Activated B cell treated with CpG ODN at 0.5 μM for 24 hours (primary cell): ENCODE measurements at regions of chr16 and their contacts with region 1.

Region 1: DNA sequence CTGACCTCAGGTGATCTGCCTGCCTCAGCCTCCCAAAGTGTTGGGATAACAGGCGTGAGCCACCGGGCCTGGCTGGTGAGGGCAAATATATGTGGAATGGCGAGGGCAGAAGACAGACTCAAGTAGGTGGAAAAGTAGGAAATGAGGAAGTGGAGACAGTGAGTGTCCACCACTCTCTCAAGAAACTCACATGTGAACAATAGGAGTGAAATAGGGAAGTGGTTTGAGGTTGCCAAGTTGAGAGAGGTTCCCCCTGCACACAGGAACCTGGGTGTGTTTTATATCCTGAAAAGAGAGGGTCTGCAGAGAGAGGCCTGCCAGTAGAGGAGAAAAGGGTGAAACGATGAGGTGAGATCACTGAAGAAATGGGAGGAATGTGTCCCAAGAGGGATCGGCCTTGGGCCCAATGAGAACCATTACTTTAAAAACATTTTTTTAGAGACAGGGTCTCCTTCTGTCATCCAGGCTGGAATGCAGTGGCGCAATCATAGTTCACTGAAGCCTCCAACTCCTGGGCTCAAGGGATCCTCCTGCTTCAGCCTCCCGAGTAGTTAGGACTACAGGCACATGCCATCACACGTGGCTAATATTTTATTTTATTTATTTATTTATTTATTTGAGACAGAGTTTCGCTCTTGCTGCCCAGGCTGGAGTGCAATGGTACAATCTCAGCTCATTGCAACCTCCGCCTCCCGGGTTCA is 17.1 kb upstream of the CORO1A start:
- DNase-seq: no peak
- ATAC-seq: peak; percentile 97
- H3K4me3 Mint-ChIP-seq: peak overlapping the region; percentile 7
- H3K27ac Mint-ChIP-seq: peak overlapping the region; percentile 70
- H3K4me1 Mint-ChIP-seq: peaks cover 26% of the 10 kb centered on the region
- H3K27me3 Mint-ChIP-seq: no peaks in the 10 kb centered on the region
- CTCF ChIP-seq: no peak

Region 2: DNA sequence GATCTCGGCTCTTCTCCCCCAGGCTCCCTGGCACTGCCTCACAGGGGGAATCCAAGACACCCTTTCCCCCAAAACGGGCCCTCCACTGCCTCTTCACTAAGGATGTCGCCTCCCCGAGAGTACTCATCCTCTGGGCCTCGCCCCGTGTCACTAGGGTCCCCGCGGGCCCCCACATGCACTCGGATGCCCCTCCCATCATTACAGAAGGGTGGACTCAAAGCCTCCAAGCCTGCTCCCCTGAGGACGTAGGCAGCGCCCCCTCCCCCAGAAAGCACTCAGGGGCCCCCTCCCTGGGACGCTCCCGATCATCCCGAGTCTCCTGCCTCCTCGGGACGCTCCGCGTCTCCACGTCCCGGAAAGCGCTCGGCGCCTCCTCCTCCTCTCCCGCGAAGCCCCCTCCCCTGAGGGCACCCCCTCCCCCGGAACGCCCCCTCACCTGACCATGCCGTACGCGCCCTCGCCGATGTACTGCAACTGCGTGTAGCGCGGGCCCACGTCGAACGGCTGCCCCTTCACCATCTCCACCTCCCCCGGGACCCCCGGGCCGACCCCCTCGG is 43.7 kb before region 1 on chr16:
- CTCF ChIA-PET with region 1: no interaction called
- POLR2A ChIA-PET with region 1: interaction called, 3 read pairs
- intact Hi-C with region 1: loop called (anchors 5 kb)
- DNase-seq: peak; percentile 21
- ATAC-seq: peak; percentile 5
- H3K4me3 Mint-ChIP-seq: peak overlapping the region; percentile 86
- H3K27ac Mint-ChIP-seq: peak overlapping the region; percentile 76
- H3K4me1 Mint-ChIP-seq: peaks cover 22% of the 10 kb centered on the region
- H3K27me3 Mint-ChIP-seq: no peaks in the 10 kb centered on the region
- CTCF ChIP-seq: no peak

Region 3: DNA sequence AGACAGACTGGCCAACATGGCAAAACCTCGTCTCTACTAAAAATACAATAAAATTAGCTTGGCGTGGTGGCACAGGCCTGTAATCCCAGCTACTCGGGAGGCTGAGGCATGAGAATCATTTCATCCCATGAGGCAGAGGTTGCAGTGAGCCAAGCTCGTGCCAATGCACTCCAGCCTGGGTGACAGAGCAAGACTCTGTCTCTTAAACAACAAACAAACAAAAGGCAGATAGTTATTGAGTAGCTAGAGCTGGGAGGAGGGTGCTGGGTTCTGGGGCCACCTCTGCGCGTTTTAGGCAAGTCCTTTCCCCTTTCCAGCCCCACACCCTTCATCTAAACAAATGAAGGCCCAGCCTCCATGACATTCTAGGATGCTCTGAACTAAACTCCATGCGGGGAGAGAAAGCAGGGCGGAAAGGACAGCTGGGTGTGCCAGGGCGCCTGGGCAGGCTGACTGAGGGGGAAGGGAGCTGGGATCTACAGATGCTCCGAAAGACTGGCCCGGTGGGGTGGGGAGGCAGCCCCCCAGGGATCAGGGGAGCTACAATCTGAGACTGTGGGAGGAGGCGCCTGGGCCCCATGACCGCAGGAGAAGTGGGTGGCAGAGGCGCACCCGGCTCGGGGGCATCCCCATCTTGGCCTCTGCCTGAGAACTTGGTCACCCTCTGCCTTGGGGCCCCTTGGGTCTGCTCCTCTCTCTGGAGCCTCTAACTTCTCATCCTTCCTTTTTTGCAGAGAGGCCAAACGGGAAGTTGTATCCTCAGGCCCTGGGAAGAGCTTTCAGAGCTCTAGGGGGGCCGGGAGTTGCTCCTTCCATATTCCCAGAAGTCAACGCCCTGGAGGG is 307.1 kb after region 1 on chr16:
- CTCF ChIA-PET with region 1: no interaction called
- POLR2A ChIA-PET with region 1: no interaction called
- intact Hi-C with region 1: no loop called
- DNase-seq: peak; percentile 55
- ATAC-seq: peak; percentile 42
- H3K4me3 Mint-ChIP-seq: peak overlapping the region; percentile 89
- H3K27ac Mint-ChIP-seq: peak overlapping the region; percentile 94
- H3K4me1 Mint-ChIP-seq: peaks cover 67% of the 10 kb centered on the region
- H3K27me3 Mint-ChIP-seq: no peaks in the 10 kb centered on the region
- CTCF ChIP-seq: no peak